CD4-positive, alpha-beta memory T cell (primary cell): ENCODE measurements at regions of chr1 and their contacts with region 1.

Region 1: DNA sequence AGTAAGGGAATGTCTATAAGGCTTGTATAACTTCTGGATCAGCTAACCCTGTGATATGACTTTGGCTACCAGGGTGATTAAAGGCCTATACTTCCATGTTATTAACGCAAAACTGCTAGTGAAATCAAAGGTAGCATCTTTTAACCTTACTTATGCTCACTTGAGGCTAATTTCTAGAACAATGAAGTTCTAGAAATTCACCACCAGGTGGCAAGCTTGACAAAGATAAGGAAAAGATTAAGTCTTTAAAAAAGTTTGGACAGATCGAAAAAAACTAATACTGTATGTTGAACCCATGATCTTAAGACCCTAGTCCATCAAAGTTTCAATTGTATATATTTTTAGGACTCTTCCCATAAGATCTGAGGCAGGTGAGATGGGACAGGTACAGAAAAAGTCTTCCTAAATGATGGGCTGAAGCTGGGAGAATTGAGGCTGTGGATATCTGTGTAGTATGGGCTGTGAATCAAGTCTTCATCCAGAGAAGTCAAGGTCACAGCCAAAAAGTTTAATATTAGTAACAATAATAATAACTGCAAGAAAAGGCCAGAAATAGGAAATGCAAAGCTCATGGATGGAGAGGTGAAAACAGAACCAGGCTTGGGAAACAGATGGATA is 18.8 kb downstream of the KYAT3 start:
- DNase-seq: peak in 4 of 5 donors; percentile 25 to 39 (median 33)
- H3K4me3 ChIP-seq: no peak overlapping the region
- H3K4me3 Mint-ChIP-seq: peak overlapping the region in 1 of 8 donors; percentile 0
- H3K27ac ChIP-seq: no peak overlapping the region
- H3K27ac Mint-ChIP-seq: peak overlapping the region in 3 of 7 donors; percentile 2 to 74 (median 26)
- H3K4me1 ChIP-seq: peaks cover 8% of the 10 kb centered on the region
- H3K4me1 Mint-ChIP-seq: peaks cover 15 to 23% (median 15%) of the 10 kb centered on the region in 4 donors
- H3K27me3 ChIP-seq: no peaks in the 10 kb centered on the region
- H3K27me3 Mint-ChIP-seq: no peaks in the 10 kb centered on the region

Region 2: GRCh38 chr1:88956003-88956402 is 17.6 kb before region 1 on chr1:
- CTCF ChIA-PET with region 1: interaction called, 10 read pairs
- POLR2A ChIA-PET with region 1: no interaction called
- intact Hi-C with region 1: no loop called
- DNase-seq: no peak
- H3K4me3 ChIP-seq: no peak overlapping the region
- H3K4me3 Mint-ChIP-seq: no peak overlapping the region
- H3K27ac ChIP-seq: no peak overlapping the region
- H3K27ac Mint-ChIP-seq: no peak overlapping the region
- H3K4me1 ChIP-seq: no peaks in the 10 kb centered on the region
- H3K4me1 Mint-ChIP-seq: peaks cover 0 to 3% (median 0%) of the 10 kb centered on the region in 4 donors
- H3K27me3 ChIP-seq: no peaks in the 10 kb centered on the region
- H3K27me3 Mint-ChIP-seq: no peaks in the 10 kb centered on the region

Region 3: DNA sequence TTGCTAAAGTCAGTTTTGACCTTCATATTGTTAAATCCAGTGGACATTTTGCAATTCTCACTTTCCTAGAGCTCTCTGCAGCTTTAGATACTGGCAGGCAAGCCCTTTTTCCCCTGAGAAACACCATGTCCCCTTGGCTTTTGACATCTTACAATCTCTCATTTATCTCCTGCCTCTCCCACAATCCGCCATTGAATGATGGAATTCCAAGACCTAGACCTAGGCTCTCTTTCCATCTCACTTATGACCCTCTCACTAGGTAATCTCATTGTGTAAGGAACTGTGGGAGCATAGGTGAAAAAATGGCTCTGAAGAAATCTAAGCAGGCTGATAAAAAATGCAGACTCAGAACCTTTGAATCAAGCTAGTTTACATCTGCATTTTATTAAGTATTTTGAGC is 16.8 kb after region 1 on chr1:
- CTCF ChIA-PET with region 1: interaction called, 71 read pairs
- POLR2A ChIA-PET with region 1: interaction called, 3 read pairs
- intact Hi-C with region 1: no loop called
- DNase-seq: no peak
- H3K4me3 ChIP-seq: no peak overlapping the region
- H3K4me3 Mint-ChIP-seq: peak overlapping the region in 7 of 8 donors; percentile 2 to 54 (median 15)
- H3K27ac ChIP-seq: peak overlapping the region; percentile 97
- H3K27ac Mint-ChIP-seq: peak overlapping the region in 5 of 7 donors; percentile 19 to 90 (median 71)
- H3K4me1 ChIP-seq: peaks cover 54% of the 10 kb centered on the region
- H3K4me1 Mint-ChIP-seq: peaks cover 32 to 59% (median 41%) of the 10 kb centered on the region in 4 donors
- H3K27me3 ChIP-seq: no peaks in the 10 kb centered on the region
- H3K27me3 Mint-ChIP-seq: no peaks in the 10 kb centered on the region

Region 4: GRCh38 chr1:88998716-88999115 is 25.1 kb after region 1 on chr1:
- CTCF ChIA-PET with region 1: interaction called, 10 read pairs
- POLR2A ChIA-PET with region 1: interaction called, 3 read pairs
- intact Hi-C with region 1: no loop called
- DNase-seq: peak; percentile 51 to 74 (median 71)
- H3K4me3 ChIP-seq: no peak overlapping the region
- H3K4me3 Mint-ChIP-seq: no peak overlapping the region
- H3K27ac ChIP-seq: no peak overlapping the region
- H3K27ac Mint-ChIP-seq: no peak overlapping the region
- H3K4me1 ChIP-seq: peaks cover 25% of the 10 kb centered on the region
- H3K4me1 Mint-ChIP-seq: peaks cover 20 to 40% (median 30%) of the 10 kb centered on the region in 4 donors
- H3K27me3 ChIP-seq: no peaks in the 10 kb centered on the region
- H3K27me3 Mint-ChIP-seq: no peaks in the 10 kb centered on the region